PC-9 (cell line): ENCODE measurements at regions of chr14 and their contacts with region 1.

Region 1: DNA sequence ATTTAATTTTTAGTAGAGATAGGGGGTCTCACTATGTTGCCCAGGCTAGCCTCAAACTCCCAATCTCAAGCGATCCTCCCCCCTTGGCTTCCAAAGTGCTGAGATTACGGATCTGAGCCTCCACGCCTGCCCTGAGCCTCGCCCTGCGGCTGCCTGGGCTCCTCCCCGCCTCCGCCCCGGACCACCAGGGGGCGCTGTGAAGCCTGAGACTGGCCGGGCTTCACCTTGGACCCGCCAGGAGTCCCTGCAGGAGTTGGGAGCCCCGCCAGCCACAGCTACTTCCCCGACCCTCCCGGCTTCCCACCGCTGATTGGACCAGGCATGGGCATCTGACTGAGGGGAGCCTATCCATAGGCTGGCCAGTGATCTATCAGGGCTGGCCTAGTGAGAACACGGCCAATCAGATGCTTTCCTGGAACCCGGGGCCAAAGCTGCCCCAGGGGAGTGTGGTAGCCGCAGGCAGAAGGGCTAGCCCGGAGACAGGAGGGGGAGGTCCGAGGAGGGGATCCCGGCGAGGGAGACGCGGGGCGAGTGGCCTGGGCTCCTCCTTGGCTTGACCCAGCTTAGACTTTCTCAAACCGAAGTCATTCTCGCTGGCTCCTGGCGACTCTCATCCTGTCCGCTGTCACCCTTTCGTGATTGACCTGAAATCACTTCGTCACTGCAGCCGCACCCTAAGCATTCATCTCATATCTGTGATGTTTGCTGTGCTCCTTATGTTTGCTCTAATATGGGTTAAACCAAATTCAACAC is 15.1 kb upstream of the ANKRD9 start:
- DNase-seq: peak; percentile 99 to 100
- H3K4me3 ChIP-seq: peak overlapping the region; percentile 62
- H3K27ac ChIP-seq: peak overlapping the region; percentile 93
- H3K4me1 ChIP-seq: peaks cover 50% of the 10 kb centered on the region
- H3K27me3 ChIP-seq: no peaks in the 10 kb centered on the region
- CTCF ChIP-seq: peak; percentile 100

Region 2: GRCh38 chr14:102555264-102555831 is 30.7 kb after region 1 on chr14:
- CTCF ChIA-PET with region 1: interaction called, 3 read pairs
- POLR2A ChIA-PET with region 1: no interaction called
- intact Hi-C with region 1: loop called (anchors 1 kb)
- DNase-seq: no peak
- H3K4me3 ChIP-seq: no peak overlapping the region
- H3K27ac ChIP-seq: no peak overlapping the region
- H3K4me1 ChIP-seq: peaks cover 31% of the 10 kb centered on the region
- H3K27me3 ChIP-seq: no peaks in the 10 kb centered on the region
- CTCF ChIP-seq: no peak

Region 3: DNA sequence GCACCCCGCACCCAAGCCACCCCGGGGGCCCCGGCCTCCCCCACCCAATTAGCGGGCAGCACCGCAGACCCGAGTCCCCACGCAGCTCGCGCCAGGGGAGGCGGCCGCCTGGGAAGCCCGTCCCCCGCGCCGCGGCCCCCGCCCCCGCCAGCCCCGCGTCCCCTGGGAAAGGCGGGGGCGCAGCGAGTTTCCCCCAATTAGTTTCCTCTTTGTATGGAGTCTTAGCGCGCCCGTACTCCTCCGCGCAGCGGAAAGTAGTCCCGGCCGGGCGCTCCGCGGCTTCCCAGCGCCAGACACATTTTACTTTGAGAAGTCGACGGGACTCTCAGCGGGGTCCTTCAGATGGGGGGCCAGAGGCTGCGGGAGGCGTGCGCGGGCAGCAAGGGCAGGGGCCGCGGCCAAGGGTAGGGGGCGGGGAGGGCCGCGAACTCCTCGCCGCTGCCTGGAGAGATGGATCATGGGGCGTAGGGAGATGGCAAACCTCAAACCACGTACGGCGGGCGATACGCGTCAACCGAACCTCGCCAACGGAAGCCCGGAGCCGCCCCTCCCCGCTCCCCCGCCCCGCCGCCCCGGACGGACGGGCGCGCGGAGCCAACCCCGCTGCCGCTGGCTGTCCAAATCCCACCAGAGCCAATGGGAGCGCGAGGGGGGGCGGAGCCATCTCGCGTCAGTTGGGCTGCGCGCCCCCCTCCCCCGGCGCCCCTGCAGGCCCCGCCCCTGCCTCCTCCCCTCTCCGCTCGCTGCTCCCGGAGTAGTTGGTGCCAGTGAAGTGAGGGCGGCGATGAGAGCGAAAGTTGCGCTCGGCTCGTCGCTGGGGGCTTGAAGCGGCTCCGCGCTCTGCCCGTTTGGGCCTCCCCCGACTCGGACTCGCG is 67.5 kb after region 1 on chr14 and contains the start of gene RCOR1:
- CTCF ChIA-PET with region 1: interaction called, 11 read pairs
- POLR2A ChIA-PET with region 1: interaction called, 4 read pairs
- intact Hi-C with region 1: loop called (anchors 1 kb)
- DNase-seq: peak; percentile 93 to 100
- H3K4me3 ChIP-seq: peak within 1 kb of the TSS; percentile 90
- H3K27ac ChIP-seq: peak within 1 kb of the TSS; percentile 96
- H3K4me1 ChIP-seq: peaks cover 35% of the 10 kb centered on the region
- H3K27me3 ChIP-seq: no peaks in the 10 kb centered on the region
- CTCF ChIP-seq: no peak
- total RNA-seq, gene RCOR1: 54.2 and 67.2 TPM in 2 replicates

Region 4: GRCh38 chr14:102708494-102708893 is 183.9 kb after region 1 on chr14:
- CTCF ChIA-PET with region 1: interaction called, 4 read pairs
- POLR2A ChIA-PET with region 1: interaction called, 4 read pairs
- intact Hi-C with region 1: loop called (anchors 1 kb)
- DNase-seq: no peak
- H3K4me3 ChIP-seq: no peak overlapping the region
- H3K27ac ChIP-seq: no peak overlapping the region
- H3K4me1 ChIP-seq: peaks cover 15% of the 10 kb centered on the region
- H3K27me3 ChIP-seq: no peaks in the 10 kb centered on the region
- CTCF ChIP-seq: no peak

Region 5: DNA sequence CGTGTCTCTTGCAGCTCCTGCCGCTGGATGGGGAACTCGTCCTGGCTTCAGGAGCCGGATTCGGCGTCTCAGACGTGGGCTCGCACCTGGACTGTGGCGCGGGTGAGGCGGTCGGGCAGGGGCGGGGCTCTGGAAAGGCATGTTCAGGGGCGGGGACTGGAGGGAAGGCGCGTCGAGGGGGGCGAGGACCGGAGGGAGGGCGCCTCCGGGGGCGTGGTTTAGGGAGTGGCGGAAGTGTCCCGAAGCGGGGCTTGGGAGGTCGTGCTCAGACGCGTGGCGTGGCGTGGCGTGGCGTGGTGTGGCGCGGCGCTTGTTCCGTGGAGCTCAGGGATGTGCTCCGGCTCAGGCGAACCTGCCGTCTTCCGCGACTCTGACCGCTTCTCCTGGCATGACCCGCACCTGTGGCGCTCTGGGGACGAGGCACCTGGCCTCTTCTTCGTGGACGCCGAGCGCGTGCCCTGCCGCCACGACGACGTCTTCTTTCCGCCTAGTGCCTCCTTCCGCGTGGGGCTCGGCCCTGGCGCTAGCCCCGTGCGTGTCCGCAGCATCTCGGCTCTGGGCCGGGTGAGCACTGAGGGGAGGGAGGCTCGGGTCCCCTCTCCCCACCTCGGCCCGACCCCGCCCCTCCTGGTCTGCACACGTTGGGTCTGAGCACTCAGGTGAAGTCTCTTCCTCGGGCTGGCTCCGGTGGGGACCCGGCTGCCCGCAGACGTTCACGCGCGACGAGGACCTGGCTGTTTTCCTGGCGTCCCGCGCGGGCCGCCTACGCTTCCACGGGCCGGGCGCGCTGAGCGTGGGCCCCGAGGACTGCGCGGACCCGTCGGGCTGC is 404.0 kb after region 1 on chr14:
- CTCF ChIA-PET with region 1: interaction called, 3 read pairs
- POLR2A ChIA-PET with region 1: interaction called, 7 read pairs
- intact Hi-C with region 1: loop called (anchors 1 kb)
- DNase-seq: peak; percentile 83 to 97
- H3K4me3 ChIP-seq: peak overlapping the region; percentile 87
- H3K27ac ChIP-seq: peak overlapping the region; percentile 74
- H3K4me1 ChIP-seq: peaks cover 20% of the 10 kb centered on the region
- H3K27me3 ChIP-seq: no peaks in the 10 kb centered on the region
- CTCF ChIP-seq: no peak

Region 6: DNA sequence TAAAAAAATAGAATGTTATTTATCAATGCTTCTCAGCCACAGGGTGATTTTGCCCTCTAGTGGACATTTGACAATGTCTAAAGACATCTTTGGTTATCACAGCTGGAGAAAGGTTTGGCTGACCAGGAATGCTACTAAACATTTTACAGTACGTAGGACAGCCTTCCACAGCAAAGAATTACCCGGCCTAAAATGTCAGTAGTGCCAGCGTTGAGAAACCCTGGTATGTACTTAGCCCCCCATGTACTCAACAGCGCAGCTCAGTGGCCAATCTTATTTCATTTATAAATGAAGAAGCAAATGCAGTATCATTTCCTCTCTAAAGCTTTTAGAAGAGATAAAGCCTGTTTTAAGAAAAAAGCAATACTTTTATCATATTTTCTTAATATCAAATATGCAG is 866.4 kb after region 1 on chr14:
- CTCF ChIA-PET with region 1: no interaction called
- POLR2A ChIA-PET with region 1: no interaction called
- intact Hi-C with region 1: loop called (anchors 10 kb)
- DNase-seq: peak; percentile 45 to 72
- H3K4me3 ChIP-seq: no peak overlapping the region
- H3K27ac ChIP-seq: no peak overlapping the region
- H3K4me1 ChIP-seq: peaks cover 57% of the 10 kb centered on the region
- H3K27me3 ChIP-seq: no peaks in the 10 kb centered on the region
- CTCF ChIP-seq: peak; percentile 97